ENCODE measurements at regions of chr3 and their contacts with region 1.

Region 1: DNA sequence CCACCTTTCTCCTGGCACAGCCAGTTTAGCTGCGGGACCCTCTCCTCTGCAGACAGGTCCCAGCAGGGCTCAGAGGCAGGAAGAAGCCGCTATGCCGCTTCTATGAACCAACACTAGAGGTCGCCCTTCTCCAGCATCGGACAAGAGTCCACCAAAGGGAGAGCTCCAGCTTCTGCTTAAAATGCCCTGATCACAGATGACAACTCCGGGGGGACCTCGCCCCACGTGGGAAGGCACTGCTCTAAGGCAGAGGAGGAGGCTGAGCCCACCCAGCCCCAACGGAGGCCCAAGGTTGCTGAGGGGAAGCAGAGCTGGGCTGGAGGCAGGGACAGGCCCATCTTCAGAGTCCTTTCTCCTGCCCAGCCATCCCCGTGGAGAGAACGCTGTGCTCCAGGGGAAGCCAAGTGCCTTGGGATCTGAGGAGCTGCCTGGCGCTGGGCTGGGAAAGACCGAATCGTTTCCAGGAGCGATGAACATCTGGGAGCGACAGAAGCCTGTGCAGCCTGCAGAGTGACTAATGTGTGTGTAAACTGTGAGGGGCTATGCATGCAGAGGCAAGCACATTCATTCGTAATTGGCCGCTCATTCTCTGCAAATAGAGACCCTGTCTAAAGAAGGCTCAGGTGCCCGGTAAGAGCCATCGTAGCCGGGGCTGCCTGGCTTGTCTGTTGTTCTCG is 43.5 kb upstream of the BDH1 start:
- DNase-seq: no peak
- H3K4me3 ChIP-seq: peak overlapping the region; percentile 55
- CTCF ChIP-seq: peak; percentile 84

Region 2: GRCh38 chr3:197372047-197372666 is 227.1 kb before region 1 on chr3:
- CTCF ChIA-PET with region 1: no interaction called
- POLR2A ChIA-PET with region 1: no interaction called
- DNase-seq: peak; percentile 79
- H3K4me3 ChIP-seq: no peak overlapping the region
- CTCF ChIP-seq: no peak

Region 3: DNA sequence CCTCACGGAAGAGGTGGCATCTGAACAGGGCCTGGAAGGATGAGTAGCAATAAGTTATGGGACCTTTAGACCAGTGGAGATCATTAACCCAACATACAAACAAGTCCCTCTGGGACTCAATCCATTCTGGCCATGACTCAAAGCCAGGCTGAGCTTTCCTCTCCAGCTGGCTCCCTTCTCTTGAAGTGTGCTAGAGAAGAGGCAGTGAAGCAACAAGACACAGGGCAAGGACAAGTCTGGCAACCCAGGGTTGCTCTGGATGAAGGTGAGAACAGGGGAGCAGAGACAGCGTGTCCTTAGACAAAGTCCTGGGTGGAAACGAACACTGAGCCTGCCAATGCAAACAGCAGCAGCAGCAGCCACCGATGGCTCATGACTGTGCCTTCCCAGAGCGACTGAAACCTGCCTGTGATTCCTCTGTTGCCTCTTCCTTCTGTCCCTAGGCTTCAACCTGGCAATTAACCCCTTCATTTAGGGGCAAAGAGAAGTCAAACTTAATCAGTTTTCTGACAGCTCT is 130.3 kb before region 1 on chr3:
- CTCF ChIA-PET with region 1: no interaction called
- POLR2A ChIA-PET with region 1: no interaction called
- DNase-seq: no peak
- H3K4me3 ChIP-seq: no peak overlapping the region
- CTCF ChIP-seq: no peak

Region 4: GRCh38 chr3:197580253-197580691 is 19.0 kb before region 1 on chr3:
- CTCF ChIA-PET with region 1: interaction called, 92 read pairs
- POLR2A ChIA-PET with region 1: no interaction called
- DNase-seq: no peak
- H3K4me3 ChIP-seq: no peak overlapping the region
- CTCF ChIP-seq: no peak

Region 5: DNA sequence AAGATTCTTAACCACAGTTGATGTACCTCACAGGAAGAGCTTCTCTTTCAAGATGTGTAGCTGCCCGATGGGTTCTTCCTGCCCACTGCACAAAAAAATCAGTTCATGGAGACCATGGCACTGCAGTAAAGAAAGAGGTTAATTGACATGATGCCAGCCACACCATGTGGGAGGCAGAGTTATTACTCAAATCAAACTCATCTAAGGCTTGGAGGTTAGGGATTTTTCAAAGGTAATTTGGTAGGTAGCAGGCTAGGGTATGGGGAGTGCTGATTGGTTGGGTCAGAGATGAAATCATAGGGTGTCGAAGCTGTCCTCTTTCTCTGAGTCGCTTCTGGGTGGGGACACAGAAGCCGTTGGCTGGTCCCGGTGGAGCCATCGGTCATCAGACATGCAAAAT is 14.0 kb after region 1 on chr3:
- CTCF ChIA-PET with region 1: interaction called, 123 read pairs
- POLR2A ChIA-PET with region 1: no interaction called
- DNase-seq: no peak
- H3K4me3 ChIP-seq: no peak overlapping the region
- CTCF ChIP-seq: no peak